Activated naive CD4-positive, alpha-beta T cell treated with anti-CD3 and anti-CD28 coated beads for 36 hours (primary cell): ENCODE measurements at regions of chr18 and their contacts with region 1.

Region 1: GRCh38 chr18:2121221-2121620 is 450.1 kb downstream of the METTL4 start:
- DNase-seq: no peak
- H3K4me3 Mint-ChIP-seq: no peak overlapping the region
- H3K27ac Mint-ChIP-seq: no peak overlapping the region
- H3K4me1 Mint-ChIP-seq: no peaks in the 10 kb centered on the region
- H3K27me3 Mint-ChIP-seq: no peaks in the 10 kb centered on the region

Region 2: DNA sequence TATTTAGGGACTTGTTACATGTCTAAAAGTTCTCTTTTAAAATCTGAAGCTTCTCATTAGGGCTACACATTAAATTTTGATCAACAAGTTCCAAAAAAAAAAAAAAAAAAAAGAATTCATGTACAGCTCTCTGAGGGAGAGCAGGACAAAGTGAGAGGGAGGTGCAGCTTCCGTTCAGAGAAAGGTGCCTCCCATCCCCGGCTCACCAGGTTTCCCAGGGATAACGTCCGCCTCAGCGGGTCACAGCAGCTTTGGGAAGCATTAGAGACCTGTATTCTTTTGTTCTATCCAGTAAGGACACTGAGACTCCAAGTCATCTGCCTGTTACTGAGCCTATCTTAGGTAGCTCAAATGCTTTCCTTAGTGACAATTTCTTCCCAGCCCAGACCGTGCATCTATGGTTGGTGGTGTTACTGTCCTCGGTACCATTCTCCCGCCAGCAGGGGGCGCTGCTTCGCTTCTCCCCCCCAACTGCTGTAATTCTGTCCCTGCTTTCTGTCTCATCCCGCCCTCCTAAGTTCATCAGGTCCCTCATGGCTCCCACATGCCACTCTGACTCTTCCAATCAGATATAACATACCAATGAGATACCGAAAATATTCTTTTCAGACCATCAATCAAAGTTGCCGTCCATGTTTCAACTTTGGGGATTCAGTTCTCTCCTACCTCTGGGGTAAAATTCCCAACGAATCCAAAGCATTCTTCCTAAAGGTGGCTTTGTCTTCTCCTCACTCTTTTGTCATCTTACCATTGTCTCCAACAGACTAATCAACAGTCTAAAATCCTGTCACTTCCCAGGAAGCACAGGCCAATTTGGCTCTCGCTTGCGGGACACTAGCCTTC is 16.4 kb before region 1 on chr18:
- CTCF ChIA-PET with region 1: interaction called, 10 read pairs
- intact Hi-C with region 1: no loop called
- DNase-seq: peak; percentile 61
- H3K4me3 Mint-ChIP-seq: no peak overlapping the region
- H3K27ac Mint-ChIP-seq: no peak overlapping the region
- H3K4me1 Mint-ChIP-seq: no peaks in the 10 kb centered on the region
- H3K27me3 Mint-ChIP-seq: peaks cover 5% of the 10 kb centered on the region

Region 3: DNA sequence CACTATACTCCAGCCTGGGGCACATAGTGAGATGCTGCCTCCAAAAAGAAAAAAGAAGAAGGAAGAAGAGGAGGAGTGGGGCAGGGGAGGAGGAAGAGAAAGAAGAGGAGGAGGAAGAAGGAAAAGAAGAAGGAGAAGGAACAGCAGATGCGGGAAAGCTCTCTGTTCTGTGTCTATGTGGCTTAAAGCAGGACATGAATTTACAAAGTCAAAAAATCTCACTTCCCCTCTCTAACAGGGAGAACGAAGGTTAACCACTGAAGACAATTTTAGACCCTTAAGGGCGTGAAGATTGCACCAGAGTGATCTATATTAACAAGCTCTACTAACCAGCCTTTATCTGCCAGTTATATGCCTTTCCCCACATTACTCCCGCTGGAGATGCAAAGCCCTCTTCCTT is 191.2 kb after region 1 on chr18:
- CTCF ChIA-PET with region 1: no interaction called
- intact Hi-C with region 1: no loop called
- DNase-seq: no peak
- H3K4me3 Mint-ChIP-seq: no peak overlapping the region
- H3K27ac Mint-ChIP-seq: no peak overlapping the region
- H3K4me1 Mint-ChIP-seq: no peaks in the 10 kb centered on the region
- H3K27me3 Mint-ChIP-seq: peaks cover 12% of the 10 kb centered on the region